ENCODE measurements at regions of chr5 and their contacts with region 1.

Region 1: DNA sequence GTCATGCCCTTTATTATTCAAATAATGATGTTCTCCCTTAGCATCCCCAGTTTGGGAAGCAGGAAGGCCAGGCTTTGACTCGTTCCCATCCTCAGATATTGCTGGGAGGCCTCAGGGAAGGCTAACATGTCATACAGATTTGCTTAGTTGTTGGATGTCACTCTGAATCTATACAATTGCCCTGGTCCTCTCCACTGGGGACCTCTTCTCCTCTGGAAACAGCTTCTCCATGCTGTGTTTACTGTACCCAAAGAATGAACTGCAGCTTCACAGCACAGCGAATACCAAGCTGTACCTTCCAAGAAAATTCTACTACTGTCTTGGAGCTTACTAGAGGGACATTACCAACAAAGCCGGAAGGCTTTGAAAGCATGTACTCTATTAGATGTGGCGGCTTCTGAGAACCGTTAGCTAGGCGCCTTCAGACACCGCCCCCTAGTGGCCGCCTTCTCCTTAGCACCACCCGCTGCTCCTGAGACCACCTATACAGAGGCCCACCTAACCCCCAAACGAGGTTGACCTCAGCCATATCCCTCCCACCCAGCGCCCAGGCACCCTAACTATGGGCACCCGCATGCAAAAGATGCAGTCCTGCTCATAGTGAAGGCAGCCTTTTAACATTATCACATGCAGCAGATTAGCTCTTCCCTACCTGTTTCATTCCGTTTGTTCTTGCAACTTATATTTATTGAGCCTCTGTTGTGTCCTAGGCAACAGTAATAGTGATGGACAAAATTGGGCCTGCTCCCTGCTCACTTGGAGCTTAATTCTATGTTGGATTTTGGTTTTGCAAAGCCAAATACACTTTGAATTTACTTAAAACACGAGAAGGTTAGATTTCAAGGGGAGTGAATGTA is 34.9 kb upstream of the FOXI1 start:
- DNase-seq: no peak
- H3K4me3 Mint-ChIP-seq: no peak overlapping the region
- H3K27ac Mint-ChIP-seq: no peak overlapping the region
- H3K4me1 Mint-ChIP-seq: no peaks in the 10 kb centered on the region
- H3K27me3 Mint-ChIP-seq: no peaks in the 10 kb centered on the region

Region 2: GRCh38 chr5:169719360-169720314 is 351.1 kb before region 1 on chr5:
- intact Hi-C with region 1: loop called (anchors 10 kb)
- DNase-seq: no peak
- H3K4me3 Mint-ChIP-seq: no peak overlapping the region
- H3K27ac Mint-ChIP-seq: peak overlapping the region; percentile 6
- H3K4me1 Mint-ChIP-seq: peaks cover 30% of the 10 kb centered on the region
- H3K27me3 Mint-ChIP-seq: no peaks in the 10 kb centered on the region